Activated naive CD4-positive, alpha-beta T cell treated with anti-CD3 and anti-CD28 coated beads for 36 hours (primary cell): ENCODE measurements at regions of chr3 and their contacts with region 1.

Region 1: DNA sequence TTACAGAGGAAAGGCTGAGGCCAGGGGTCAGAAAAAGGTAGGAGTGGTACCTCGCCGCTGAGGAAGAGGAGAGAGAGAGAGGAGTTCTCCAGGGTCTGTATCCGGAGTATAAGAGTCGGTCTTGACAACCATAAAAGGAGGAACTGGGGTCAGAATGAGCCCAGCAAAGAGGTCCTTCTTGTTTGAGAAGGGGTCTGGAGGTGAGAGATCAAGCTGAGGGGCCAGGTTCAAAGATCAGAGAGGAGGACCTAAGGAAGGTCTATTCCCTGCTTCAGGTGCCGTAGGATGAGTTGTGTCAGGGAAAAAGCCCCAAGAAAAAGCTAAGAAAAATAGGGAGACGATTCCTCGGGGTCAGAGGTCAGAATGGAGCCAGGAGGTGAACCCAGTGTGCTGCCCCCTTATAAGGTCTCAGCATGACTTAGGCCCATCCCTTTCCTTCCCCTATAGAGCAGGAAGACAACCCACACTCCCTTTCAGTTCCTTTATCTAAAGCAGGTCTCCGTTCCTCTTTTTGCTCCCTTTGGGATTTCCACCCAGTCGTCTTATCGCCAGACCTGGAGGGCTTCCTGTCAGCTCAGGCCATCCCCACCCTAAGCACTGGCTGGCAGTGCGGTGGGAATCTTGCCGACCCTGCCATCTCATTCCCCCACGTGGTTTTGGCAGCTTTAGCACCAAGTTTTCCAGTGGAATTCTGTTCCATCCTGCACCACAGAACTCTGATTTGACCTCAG is 651 bp downstream of the MTMR14 start:
- DNase-seq: no peak
- H3K4me3 Mint-ChIP-seq: peak overlapping the region; percentile 94
- H3K27ac Mint-ChIP-seq: peak overlapping the region; percentile 86
- H3K4me1 Mint-ChIP-seq: peaks cover 32% of the 10 kb centered on the region
- H3K27me3 Mint-ChIP-seq: no peaks in the 10 kb centered on the region

Region 2: DNA sequence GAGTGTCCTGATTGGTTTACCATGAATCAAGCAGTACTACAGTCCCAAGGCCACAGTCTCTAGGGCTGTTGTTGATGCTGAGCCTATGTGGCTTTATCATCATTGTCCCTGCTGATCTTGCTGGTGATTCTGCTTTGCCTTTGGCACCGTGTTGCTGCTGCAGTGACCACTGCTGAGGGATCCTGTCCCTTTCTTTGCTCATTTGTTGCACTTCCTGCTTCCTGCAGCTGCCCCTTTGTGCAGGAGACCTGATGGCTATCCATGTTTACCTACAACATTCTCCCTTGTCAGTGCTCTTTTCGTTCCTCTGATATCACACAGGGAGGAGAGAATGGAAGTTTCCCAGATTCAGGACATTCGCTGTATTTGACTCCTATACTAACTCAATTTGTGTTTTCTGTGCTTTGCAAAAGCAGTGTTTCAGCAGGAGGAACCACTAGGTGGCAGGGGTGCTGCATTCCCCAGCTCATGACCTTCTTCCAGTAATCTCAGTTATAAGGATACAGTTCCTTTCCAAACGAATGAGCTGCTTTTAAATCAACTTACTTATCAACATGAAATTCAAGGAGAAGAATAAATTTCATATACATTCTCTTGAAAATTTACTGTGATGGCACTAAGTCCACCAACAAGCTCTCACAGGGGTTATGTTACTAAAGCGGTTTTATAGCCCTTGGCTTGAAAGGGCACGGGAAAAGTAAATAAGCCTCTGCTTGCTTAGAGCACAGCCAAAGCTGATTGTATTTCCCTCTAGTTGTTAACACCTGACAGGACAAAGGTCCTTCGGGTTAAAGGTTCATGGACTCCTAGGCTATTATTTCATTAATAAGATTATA is 296.8 kb before region 1 on chr3:
- CTCF ChIA-PET with region 1: interaction called, 5 read pairs
- intact Hi-C with region 1: loop called (anchors 1 kb)
- DNase-seq: peak; percentile 78
- H3K4me3 Mint-ChIP-seq: no peak overlapping the region
- H3K27ac Mint-ChIP-seq: peak overlapping the region; percentile 57
- H3K4me1 Mint-ChIP-seq: peaks cover 22% of the 10 kb centered on the region
- H3K27me3 Mint-ChIP-seq: no peaks in the 10 kb centered on the region

Region 3: DNA sequence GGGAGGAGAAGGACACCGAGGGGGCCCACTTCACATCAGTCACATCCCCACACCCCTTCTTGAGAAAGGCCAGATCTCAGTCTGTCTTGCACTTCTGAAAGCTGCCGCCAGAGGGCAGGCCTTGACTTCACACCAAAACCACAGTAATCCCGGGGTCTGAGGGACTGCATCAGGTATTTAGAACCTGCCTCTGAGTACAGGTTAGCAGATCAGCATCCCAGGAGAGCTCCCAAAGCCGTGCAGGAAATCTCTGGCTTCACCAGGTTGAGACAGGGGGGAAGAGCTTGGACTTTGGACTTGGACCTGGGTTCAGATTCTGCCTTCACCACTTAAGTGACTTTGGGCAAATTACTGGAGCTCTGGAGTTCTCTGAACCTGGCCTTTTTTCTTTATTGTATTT is 146.7 kb before region 1 on chr3:
- CTCF ChIA-PET with region 1: interaction called, 7 read pairs
- intact Hi-C with region 1: loop called (anchors 5 kb)
- DNase-seq: peak; percentile 83
- H3K4me3 Mint-ChIP-seq: no peak overlapping the region
- H3K27ac Mint-ChIP-seq: no peak overlapping the region
- H3K4me1 Mint-ChIP-seq: peaks cover 6% of the 10 kb centered on the region
- H3K27me3 Mint-ChIP-seq: peaks cover 24% of the 10 kb centered on the region

Region 4: DNA sequence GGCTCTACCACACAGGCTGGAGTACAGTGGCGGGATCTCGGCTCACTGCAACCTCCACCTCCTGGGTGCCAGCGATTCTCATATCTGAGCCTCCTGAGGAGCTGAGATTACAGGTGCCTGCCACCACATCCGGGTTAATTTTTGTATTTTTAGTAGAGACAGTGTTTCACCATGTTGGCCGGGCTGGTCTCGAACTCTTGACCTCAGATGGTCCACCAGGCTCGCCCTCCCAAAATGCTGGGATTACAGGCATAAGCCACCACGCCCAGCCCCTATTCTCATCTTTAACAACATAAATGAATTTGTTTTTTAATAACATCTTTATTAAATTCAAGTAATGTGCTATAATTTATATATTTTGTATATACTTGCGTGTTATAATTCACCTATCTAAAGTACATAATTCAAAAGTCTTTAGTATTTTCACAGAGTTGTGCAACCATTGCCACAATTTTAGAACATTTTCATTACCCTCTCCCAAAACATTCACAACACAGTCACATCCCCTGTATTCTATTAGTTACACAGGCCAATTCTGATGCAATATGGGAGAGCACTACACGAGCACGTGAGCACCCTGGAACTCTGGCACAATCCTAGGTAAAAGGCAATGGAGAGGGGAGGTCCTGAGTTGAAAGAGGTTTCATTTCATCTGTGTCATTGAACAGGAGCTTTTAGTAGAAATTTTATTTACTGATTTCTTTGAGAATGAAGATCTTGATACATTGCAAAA is 21.9 kb before region 1 on chr3:
- CTCF ChIA-PET with region 1: no interaction called
- intact Hi-C with region 1: no loop called
- DNase-seq: no peak
- H3K4me3 Mint-ChIP-seq: no peak overlapping the region
- H3K27ac Mint-ChIP-seq: no peak overlapping the region
- H3K4me1 Mint-ChIP-seq: no peaks in the 10 kb centered on the region
- H3K27me3 Mint-ChIP-seq: peaks cover 3% of the 10 kb centered on the region

Region 5: GRCh38 chr3:9843715-9844438 is 193.9 kb after region 1 on chr3 and contains the start of gene RPUSD3:
- CTCF ChIA-PET with region 1: no interaction called
- intact Hi-C with region 1: loop called (anchors 1 kb)
- DNase-seq: peak; percentile 98
- H3K4me3 Mint-ChIP-seq: peak within 1 kb of the TSS; percentile 98
- H3K27ac Mint-ChIP-seq: peak within 1 kb of the TSS; percentile 89
- H3K4me1 Mint-ChIP-seq: peaks cover 30% of the 10 kb centered on the region
- H3K27me3 Mint-ChIP-seq: no peaks in the 10 kb centered on the region
- total RNA-seq, gene RPUSD3: 82.0 to 83.7 TPM

Region 6: GRCh38 chr3:10322352-10322710 is 672.4 kb after region 1 on chr3:
- CTCF ChIA-PET with region 1: no interaction called
- intact Hi-C with region 1: loop called (anchors 1 kb)
- DNase-seq: peak; percentile 29
- H3K4me3 Mint-ChIP-seq: no peak overlapping the region
- H3K27ac Mint-ChIP-seq: no peak overlapping the region
- H3K4me1 Mint-ChIP-seq: peaks cover 23% of the 10 kb centered on the region
- H3K27me3 Mint-ChIP-seq: peaks cover 1% of the 10 kb centered on the region